ENCODE measurements at regions of chr17 and their contacts with region 1.

Region 1: GRCh38 chr17:3845621-3846441 is at the start of gene NCBP3:
- DNase-seq: peak; percentile 92 to 93 (median 93)
- H3K4me3 ChIP-seq: peak within 1 kb of the TSS; percentile 77 to 95 (median 84)
- H3K4me3 Mint-ChIP-seq: peak within 1 kb of the TSS; percentile 90 to 92
- H3K27ac ChIP-seq: peak within 1 kb of the TSS; percentile 34 to 88
- H3K27ac Mint-ChIP-seq: peak within 1 kb of the TSS; percentile 79 to 93 (median 87)
- H3K4me1 ChIP-seq: peaks cover 16 to 28% of the 10 kb centered on the region in 2 donors
- H3K4me1 Mint-ChIP-seq: peaks cover 34% of the 10 kb centered on the region
- H3K27me3 ChIP-seq: no peaks in the 10 kb centered on the region
- H3K27me3 Mint-ChIP-seq: peaks cover 2 to 5% (median 4%) of the 10 kb centered on the region in 3 donors
- CTCF ChIP-seq: peak; percentile 92
- polyA plus RNA-seq, gene NCBP3: 4.9 to 19.0 (median 8.5) TPM

Region 2: GRCh38 chr17:3048767-3049471 is 796.9 kb before region 1 on chr17:
- intact Hi-C with region 1: loop called in 1 of 2 experiments (anchors 5 kb)
- DNase-seq: peak; percentile 98 to 99 (median 98)
- H3K4me3 ChIP-seq: peak overlapping the region; percentile 63 to 99 (median 96)
- H3K4me3 Mint-ChIP-seq: peak overlapping the region; percentile 88 to 93
- H3K27ac ChIP-seq: peak overlapping the region; percentile 38 to 84
- H3K27ac Mint-ChIP-seq: peak overlapping the region; percentile 68 to 94 (median 85)
- H3K4me1 ChIP-seq: peaks cover 11 to 12% of the 10 kb centered on the region in 2 donors
- H3K4me1 Mint-ChIP-seq: peaks cover 3% of the 10 kb centered on the region
- H3K27me3 ChIP-seq: no peaks in the 10 kb centered on the region
- H3K27me3 Mint-ChIP-seq: peaks cover 0 to 2% (median 0%) of the 10 kb centered on the region in 3 donors
- CTCF ChIP-seq: peak; percentile 84

Region 3: GRCh38 chr17:3788200-3788599 is 57.6 kb before region 1 on chr17:
- intact Hi-C with region 1: no loop called
- DNase-seq: no peak
- H3K4me3 ChIP-seq: no peak overlapping the region
- H3K4me3 Mint-ChIP-seq: no peak overlapping the region
- H3K27ac ChIP-seq: no peak overlapping the region
- H3K27ac Mint-ChIP-seq: no peak overlapping the region
- H3K4me1 ChIP-seq: peaks cover 17 to 20% of the 10 kb centered on the region in 2 donors
- H3K4me1 Mint-ChIP-seq: peaks cover 27% of the 10 kb centered on the region
- H3K27me3 ChIP-seq: no peaks in the 10 kb centered on the region
- H3K27me3 Mint-ChIP-seq: peaks cover 1 to 4% (median 3%) of the 10 kb centered on the region in 3 donors
- CTCF ChIP-seq: no peak

Region 4: DNA sequence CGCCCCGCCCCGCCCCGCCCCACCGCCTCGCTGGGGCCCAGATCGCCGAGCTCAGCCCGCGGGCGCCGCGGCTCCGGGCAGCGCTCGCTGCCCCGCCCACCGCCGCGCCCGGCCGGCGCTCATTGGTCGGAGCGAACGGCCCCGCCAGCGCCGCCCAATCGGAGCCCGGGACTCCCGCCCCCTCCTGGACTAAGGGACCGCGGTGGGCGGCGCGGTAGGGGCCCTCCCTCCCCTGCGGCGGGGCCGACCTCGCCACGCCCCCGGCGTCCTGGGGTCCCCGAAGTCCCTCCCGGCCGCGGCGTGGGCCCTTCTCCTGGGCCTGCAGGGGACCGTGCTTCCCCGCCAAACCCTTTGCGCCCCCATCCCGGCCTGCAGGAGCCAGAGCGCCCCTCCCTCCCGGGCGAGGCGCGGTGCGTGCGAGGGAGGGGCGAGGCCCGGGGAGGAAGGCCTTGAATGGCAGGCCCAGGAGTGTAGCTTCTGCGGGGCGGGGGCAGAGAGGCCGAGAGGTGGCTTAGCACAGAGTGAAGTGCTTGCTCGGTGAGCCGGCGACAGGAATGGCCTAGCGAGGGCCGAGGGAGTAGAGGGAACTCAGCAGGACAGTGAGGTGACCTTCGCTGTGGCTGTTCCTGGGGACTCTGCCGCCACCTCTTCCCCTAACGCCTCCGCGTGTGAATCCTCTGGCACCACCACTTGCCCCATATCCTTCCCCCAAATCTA is 47.3 kb after region 1 on chr17 and contains the start of gene CAMKK1:
- intact Hi-C with region 1: loop called (anchors 5 kb)
- DNase-seq: peak; percentile 80 to 87 (median 82)
- H3K4me3 ChIP-seq: peak within 1 kb of the TSS; percentile 39 to 79 (median 60)
- H3K4me3 Mint-ChIP-seq: peak within 1 kb of the TSS; percentile 85 to 90
- H3K27ac ChIP-seq: peak within 1 kb of the TSS; percentile 28 to 75
- H3K27ac Mint-ChIP-seq: peak within 1 kb of the TSS; percentile 69 to 92 (median 89)
- H3K4me1 ChIP-seq: peaks cover 59 to 78% of the 10 kb centered on the region in 2 donors
- H3K4me1 Mint-ChIP-seq: peaks cover 53% of the 10 kb centered on the region
- H3K27me3 ChIP-seq: no peaks in the 10 kb centered on the region
- H3K27me3 Mint-ChIP-seq: peaks cover 10 to 16% (median 11%) of the 10 kb centered on the region in 3 donors
- CTCF ChIP-seq: no peak
- polyA plus RNA-seq, gene CAMKK1: 0.74 to 24.1 (median 1.5) TPM

Region 5: GRCh38 chr17:4074831-4075495 is 229.1 kb after region 1 on chr17:
- intact Hi-C with region 1: loop called in 1 of 2 experiments (anchors 10 kb)
- DNase-seq: peak; percentile 3 to 16 (median 5)
- H3K4me3 ChIP-seq: no peak overlapping the region
- H3K4me3 Mint-ChIP-seq: peak overlapping the region in 1 of 2 donors; percentile 33
- H3K27ac ChIP-seq: peak overlapping the region; percentile 52 to 69
- H3K27ac Mint-ChIP-seq: peak overlapping the region; percentile 75 to 90 (median 85)
- H3K4me1 ChIP-seq: peaks cover 12 to 13% of the 10 kb centered on the region in 2 donors
- H3K4me1 Mint-ChIP-seq: peaks cover 15% of the 10 kb centered on the region
- H3K27me3 ChIP-seq: no peaks in the 10 kb centered on the region
- H3K27me3 Mint-ChIP-seq: peaks cover 0 to 2% (median 0%) of the 10 kb centered on the region in 3 donors
- CTCF ChIP-seq: peak; percentile 61

Region 6: DNA sequence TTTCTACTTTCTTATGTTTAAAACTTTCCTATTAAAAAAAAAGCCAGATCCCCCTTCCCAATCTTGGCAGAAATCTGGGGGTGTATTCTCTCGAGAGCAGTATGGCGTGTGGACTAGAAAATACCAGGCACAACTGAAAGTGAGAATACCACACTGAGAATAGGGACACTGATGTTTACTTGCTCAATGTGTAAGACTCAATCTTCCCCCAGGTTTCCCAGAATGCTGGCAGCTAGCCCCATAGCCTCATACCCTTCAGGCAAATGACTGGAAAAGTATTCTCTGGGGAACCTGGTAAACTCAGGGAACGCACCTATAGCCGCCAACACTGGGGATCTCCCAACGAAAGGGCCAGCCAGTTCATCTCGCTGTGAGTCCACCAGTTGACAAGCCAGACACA is 281.7 kb after region 1 on chr17:
- intact Hi-C with region 1: no loop called
- DNase-seq: no peak
- H3K4me3 ChIP-seq: no peak overlapping the region
- H3K4me3 Mint-ChIP-seq: no peak overlapping the region
- H3K27ac ChIP-seq: peak overlapping the region in 1 of 2 donors; percentile 59
- H3K27ac Mint-ChIP-seq: peak overlapping the region in 2 of 7 donors; percentile 25 to 71
- H3K4me1 ChIP-seq: peaks cover 38 to 45% of the 10 kb centered on the region in 2 donors
- H3K4me1 Mint-ChIP-seq: peaks cover 50% of the 10 kb centered on the region
- H3K27me3 ChIP-seq: no peaks in the 10 kb centered on the region
- H3K27me3 Mint-ChIP-seq: no peaks in the 10 kb centered on the region
- CTCF ChIP-seq: no peak

Region 7: GRCh38 chr17:4540224-4540641 is 694.4 kb after region 1 on chr17:
- intact Hi-C with region 1: no loop called
- DNase-seq: no peak
- H3K4me3 ChIP-seq: no peak overlapping the region
- H3K4me3 Mint-ChIP-seq: no peak overlapping the region
- H3K27ac ChIP-seq: no peak overlapping the region
- H3K27ac Mint-ChIP-seq: peak overlapping the region in 1 of 7 donors; percentile 50
- H3K4me1 ChIP-seq: peaks cover 14 to 18% of the 10 kb centered on the region in 2 donors
- H3K4me1 Mint-ChIP-seq: peaks cover 16% of the 10 kb centered on the region
- H3K27me3 ChIP-seq: no peaks in the 10 kb centered on the region
- H3K27me3 Mint-ChIP-seq: peaks cover 1 to 2% (median 2%) of the 10 kb centered on the region in 3 donors
- CTCF ChIP-seq: no peak